IMR-90 (cell line): ENCODE measurements at regions of chr2 and their contacts with region 1.

Region 1: GRCh38 chr2:118013221-118013723 is 598 bp downstream of the CCDC93 start:
- DNase-seq: no peak
- ATAC-seq: peak; percentile 36
- H3K4me3 ChIP-seq: peak overlapping the region; percentile 80
- H3K27ac ChIP-seq: peak overlapping the region; percentile 72; the same call in 1 of the 2 replicates
- H3K4me1 ChIP-seq: peaks cover 3% of the 10 kb centered on the region
- H3K27me3 ChIP-seq: no peaks in the 10 kb centered on the region
- CTCF ChIP-seq: no peak
- POLR2A ChIP-seq: no peak
- RAD21 ChIP-seq: no peak

Region 2: GRCh38 chr2:117958186-117958585 is 55.1 kb before region 1 on chr2:
- CTCF ChIA-PET with region 1: interaction called, 6 read pairs
- POLR2A ChIA-PET with region 1: no interaction called
- dilution Hi-C with region 1: no loop called
- in situ Hi-C with region 1: no loop called
- intact Hi-C with region 1: loop called (anchors 1 kb)
- DNase-seq: peak; percentile 69
- ATAC-seq: peak; percentile 78
- H3K4me3 ChIP-seq: no peak overlapping the region
- H3K27ac ChIP-seq: peak overlapping the region; percentile 77; the same call in 1 of the 2 replicates
- H3K4me1 ChIP-seq: peaks cover 5% of the 10 kb centered on the region
- H3K27me3 ChIP-seq: no peaks in the 10 kb centered on the region
- CTCF ChIP-seq: no peak
- POLR2A ChIP-seq: no peak
- RAD21 ChIP-seq: no peak